PC-3 (cell line): ENCODE measurements at regions of chr10 and their contacts with region 1.

Region 1: GRCh38 chr10:88932539-88933256 is 19.9 kb downstream of the ACTA2 start:
- DNase-seq: peak; percentile 86
- ATAC-seq: peak; percentile 76
- H3K4me3 ChIP-seq: no peak overlapping the region
- H3K27ac ChIP-seq: peak overlapping the region; percentile 15; the same call in 1 of the 2 replicates
- H3K4me1 ChIP-seq: peaks cover 13% of the 10 kb centered on the region
- H3K27me3 ChIP-seq: no peaks in the 10 kb centered on the region
- CTCF ChIP-seq: peak; percentile 81

Region 2: GRCh38 chr10:88880282-88881076 is 52.2 kb before region 1 on chr10:
- CTCF ChIA-PET with region 1: no interaction called
- POLR2A ChIA-PET with region 1: no interaction called
- intact Hi-C with region 1: loop called (anchors 1 kb)
- DNase-seq: peak; percentile 79
- ATAC-seq: peak; percentile 75
- H3K4me3 ChIP-seq: peak overlapping the region; percentile 87
- H3K27ac ChIP-seq: peak overlapping the region; percentile 57
- H3K4me1 ChIP-seq: peaks cover 37% of the 10 kb centered on the region
- H3K27me3 ChIP-seq: no peaks in the 10 kb centered on the region
- CTCF ChIP-seq: no peak

Region 3: GRCh38 chr10:88893611-88894010 is 39.1 kb before region 1 on chr10:
- CTCF ChIA-PET with region 1: no interaction called
- POLR2A ChIA-PET with region 1: no interaction called
- intact Hi-C with region 1: no loop called
- DNase-seq: no peak
- ATAC-seq: no peak
- H3K4me3 ChIP-seq: no peak overlapping the region
- H3K27ac ChIP-seq: no peak overlapping the region
- H3K4me1 ChIP-seq: peaks cover 4% of the 10 kb centered on the region; the same call in 1 of the 2 replicates
- H3K27me3 ChIP-seq: no peaks in the 10 kb centered on the region
- CTCF ChIP-seq: no peak

Region 4: GRCh38 chr10:88996927-88997326 is 64.2 kb after region 1 on chr10:
- CTCF ChIA-PET with region 1: interaction called, 13 read pairs
- POLR2A ChIA-PET with region 1: no interaction called
- intact Hi-C with region 1: no loop called
- DNase-seq: no peak
- ATAC-seq: no peak
- H3K4me3 ChIP-seq: no peak overlapping the region
- H3K27ac ChIP-seq: no peak overlapping the region
- H3K4me1 ChIP-seq: peaks cover 15% of the 10 kb centered on the region
- H3K27me3 ChIP-seq: no peaks in the 10 kb centered on the region
- CTCF ChIP-seq: no peak